Activated CD4-positive, alpha-beta T cell treated with anti-CD3 and anti-CD28 coated beads, Interleukin-2, amount 10 ng/mL, durations not matched to agents 24 days and 14 days (primary cell): ENCODE measurements at regions of chr12 and their contacts with region 1.

Region 1: GRCh38 chr12:76763743-76764675 is at the start of gene ZDHHC17:
- DNase-seq: peak; percentile 98
- H3K4me3 Mint-ChIP-seq: peak within 1 kb of the TSS; percentile 93
- H3K27ac Mint-ChIP-seq: peak within 1 kb of the TSS; percentile 95
- H3K4me1 Mint-ChIP-seq: peaks cover 16% of the 10 kb centered on the region
- H3K27me3 Mint-ChIP-seq: peaks cover 11% of the 10 kb centered on the region
- total RNA-seq, gene ZDHHC17: 24.6 and 31.2 TPM in 2 replicates

Region 2: DNA sequence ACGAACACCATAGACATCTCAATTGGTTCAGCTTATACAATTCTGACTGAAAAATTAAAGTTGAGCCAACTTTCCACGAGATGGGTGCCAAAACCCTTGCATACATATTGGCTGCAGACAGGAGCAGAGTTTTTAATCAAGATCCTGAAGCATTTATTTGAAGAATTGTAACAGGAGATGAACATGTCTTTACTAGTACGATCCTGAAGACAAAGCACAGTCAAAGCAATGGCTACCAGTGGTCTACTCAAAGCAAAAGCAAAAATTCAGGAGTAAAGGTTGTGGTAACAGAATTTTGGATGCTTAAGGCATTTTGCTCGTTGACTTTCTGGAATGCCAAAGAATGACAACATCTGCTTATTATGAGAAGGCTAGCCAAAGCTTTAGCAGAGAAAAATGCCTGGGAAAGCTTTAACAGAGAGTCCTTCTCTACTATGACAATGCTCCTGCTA is 20.6 kb after region 1 on chr12:
- intact Hi-C with region 1: loop called (anchors 2 kb)
- DNase-seq: no peak
- H3K4me3 Mint-ChIP-seq: no peak overlapping the region
- H3K27ac Mint-ChIP-seq: no peak overlapping the region
- H3K4me1 Mint-ChIP-seq: peaks cover 5% of the 10 kb centered on the region
- H3K27me3 Mint-ChIP-seq: no peaks in the 10 kb centered on the region

Region 3: GRCh38 chr12:76790564-76791552 is 26.8 kb after region 1 on chr12:
- intact Hi-C with region 1: loop called (anchors 1 kb)
- DNase-seq: no peak
- H3K4me3 Mint-ChIP-seq: no peak overlapping the region
- H3K27ac Mint-ChIP-seq: no peak overlapping the region
- H3K4me1 Mint-ChIP-seq: peaks cover 2% of the 10 kb centered on the region
- H3K27me3 Mint-ChIP-seq: no peaks in the 10 kb centered on the region

Region 4: GRCh38 chr12:76836633-76837032 is 72.6 kb after region 1 on chr12:
- intact Hi-C with region 1: no loop called
- DNase-seq: no peak
- H3K4me3 Mint-ChIP-seq: no peak overlapping the region
- H3K27ac Mint-ChIP-seq: no peak overlapping the region
- H3K4me1 Mint-ChIP-seq: no peaks in the 10 kb centered on the region
- H3K27me3 Mint-ChIP-seq: no peaks in the 10 kb centered on the region

Region 5: GRCh38 chr12:76878899-76879709 is 115.1 kb after region 1 on chr12 and contains the start of gene CSRP2:
- intact Hi-C with region 1: loop called (anchors 2 kb)
- DNase-seq: peak; percentile 89
- H3K4me3 Mint-ChIP-seq: peak within 1 kb of the TSS; percentile 93
- H3K27ac Mint-ChIP-seq: peak within 1 kb of the TSS; percentile 52
- H3K4me1 Mint-ChIP-seq: peaks cover 8% of the 10 kb centered on the region
- H3K27me3 Mint-ChIP-seq: peaks cover 61% of the 10 kb centered on the region
- total RNA-seq, gene CSRP2: 0.44 and 0.80 TPM in 2 replicates

Region 6: GRCh38 chr12:77065361-77066204 is 301.6 kb after region 1 on chr12 and contains the start of gene E2F7:
- intact Hi-C with region 1: loop called (anchors 5 kb)
- DNase-seq: peak; percentile 97
- H3K4me3 Mint-ChIP-seq: peak within 1 kb of the TSS; percentile 90
- H3K27ac Mint-ChIP-seq: peak within 1 kb of the TSS; percentile 80
- H3K4me1 Mint-ChIP-seq: peaks cover 34% of the 10 kb centered on the region
- H3K27me3 Mint-ChIP-seq: peaks cover 16% of the 10 kb centered on the region
- total RNA-seq, gene E2F7: 16.8 and 20.0 TPM in 2 replicates